CD8-positive, alpha-beta T cell (primary cell): ENCODE measurements at regions of chr12 and their contacts with region 1.

Region 1: DNA sequence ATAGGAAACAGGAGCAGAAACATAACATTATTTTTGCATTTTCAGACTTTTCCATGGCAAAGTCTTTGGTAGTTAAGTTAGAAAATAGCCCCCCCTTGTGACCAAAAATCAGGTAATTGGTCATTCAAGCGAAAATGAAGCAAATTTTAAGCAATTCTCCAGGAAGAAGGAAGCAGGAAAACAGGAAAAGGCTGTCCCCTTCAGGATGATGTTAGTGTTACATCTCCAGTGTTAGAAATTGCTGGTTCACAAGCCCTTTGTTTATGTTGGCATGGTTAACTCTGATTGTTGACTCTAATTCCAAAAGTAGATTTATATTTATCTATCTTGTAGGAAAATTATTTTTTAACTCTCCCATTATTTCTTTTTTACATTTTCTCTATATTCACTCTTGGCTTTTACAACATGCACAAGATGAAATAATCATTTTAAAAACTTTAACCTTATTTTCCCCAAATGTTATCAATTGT is 18.8 kb upstream of the GAS2L3 start:
- DNase-seq: peak in 2 of 9 experiments; percentile 22 to 41
- ATAC-seq: no peak
- H3K4me3 ChIP-seq: no peak overlapping the region
- H3K4me3 Mint-ChIP-seq: no peak overlapping the region
- H3K27ac ChIP-seq: no peak overlapping the region
- H3K27ac Mint-ChIP-seq: no peak overlapping the region
- H3K4me1 ChIP-seq: no peaks in the 10 kb centered on the region
- H3K4me1 Mint-ChIP-seq: no peaks in the 10 kb centered on the region
- H3K27me3 ChIP-seq: no peaks in the 10 kb centered on the region
- H3K27me3 Mint-ChIP-seq: peaks cover 6% of the 10 kb centered on the region
- CTCF ChIP-seq: peak; percentile 42

Region 2: DNA sequence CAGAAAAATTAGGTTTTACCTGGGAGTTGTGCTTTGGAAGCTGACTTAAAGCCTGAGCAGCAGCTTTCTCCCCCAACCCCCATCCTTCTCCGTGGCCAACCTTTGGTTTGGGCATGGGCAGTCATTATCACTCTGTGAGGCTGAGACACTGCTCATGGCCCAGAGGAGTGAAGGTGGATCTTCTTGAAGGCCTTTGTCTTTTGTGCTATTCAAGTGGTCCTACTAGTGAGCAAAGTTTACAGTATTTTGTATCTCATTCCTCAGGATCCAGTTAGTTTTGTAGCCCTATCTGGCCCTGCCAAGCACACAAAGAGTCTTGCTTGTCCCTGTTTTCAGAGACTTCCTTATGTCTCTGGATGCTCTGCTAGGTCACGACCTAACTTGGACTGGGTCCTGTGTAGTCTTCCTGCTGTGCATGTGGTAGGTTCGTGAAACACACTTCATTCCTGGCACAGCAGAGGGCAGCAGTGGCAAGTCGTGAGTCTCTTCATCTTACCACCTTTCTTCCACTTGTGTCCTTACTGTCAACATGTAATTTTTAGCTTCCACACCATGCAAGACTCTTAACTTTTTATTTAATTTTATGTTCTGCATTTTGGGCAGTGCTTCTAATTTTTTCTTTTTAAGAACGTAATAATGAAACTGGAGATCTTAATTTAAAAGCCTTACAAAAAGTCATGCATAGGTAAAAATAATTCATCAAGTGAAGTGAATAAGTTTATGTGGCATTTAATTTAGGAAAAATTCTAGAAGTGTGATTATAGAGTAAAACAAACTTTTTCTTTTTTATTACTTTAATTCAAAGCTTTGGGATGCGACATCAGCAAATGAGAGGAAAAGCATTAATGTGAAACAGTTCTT is 1855.8 kb before region 1 on chr12:
- CTCF ChIA-PET with region 1: no interaction called
- POLR2A ChIA-PET with region 1: no interaction called
- intact Hi-C with region 1: loop called in 1 of 2 experiments (anchors 10 kb)
- DNase-seq: peak in 7 of 9 experiments; percentile 2 to 50 (median 19)
- ATAC-seq: peak; percentile 63
- H3K4me3 ChIP-seq: no peak overlapping the region
- H3K4me3 Mint-ChIP-seq: no peak overlapping the region
- H3K27ac ChIP-seq: no peak overlapping the region
- H3K27ac Mint-ChIP-seq: no peak overlapping the region
- H3K4me1 ChIP-seq: no peaks in the 10 kb centered on the region
- H3K4me1 Mint-ChIP-seq: peaks cover 9% of the 10 kb centered on the region
- H3K27me3 ChIP-seq: no peaks in the 10 kb centered on the region
- H3K27me3 Mint-ChIP-seq: no peaks in the 10 kb centered on the region
- CTCF ChIP-seq: peak; percentile 41

Region 3: DNA sequence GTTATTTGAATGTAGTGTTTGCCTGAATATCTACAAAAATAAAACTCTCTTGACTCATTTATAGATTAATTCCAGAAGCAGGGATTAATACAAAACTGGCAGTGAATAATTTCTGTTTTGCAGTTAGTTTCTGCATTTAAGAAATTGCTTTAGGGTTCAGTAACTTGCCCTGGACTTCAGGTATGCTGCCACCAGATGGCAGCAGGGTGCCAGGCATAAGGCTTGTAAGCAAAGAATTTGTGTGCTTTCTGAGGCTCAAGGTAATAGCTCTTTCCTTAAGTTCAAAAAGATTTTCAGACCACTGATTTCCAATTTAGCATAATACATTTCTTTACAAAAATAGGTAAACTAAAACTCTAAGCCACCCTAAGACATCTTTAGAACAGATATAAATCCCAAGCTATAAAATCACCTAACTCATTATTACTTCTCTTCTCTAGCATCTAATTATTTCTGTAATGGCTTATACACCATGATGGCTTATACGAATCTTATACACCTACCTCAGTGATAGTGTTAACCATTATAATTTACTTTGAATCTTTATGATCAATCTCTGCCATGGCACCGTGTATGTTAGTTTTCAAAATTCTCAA is 1511.2 kb before region 1 on chr12:
- CTCF ChIA-PET with region 1: no interaction called
- POLR2A ChIA-PET with region 1: no interaction called
- intact Hi-C with region 1: loop called (anchors 5 to 10 kb)
- DNase-seq: peak in 6 of 9 experiments; percentile 1 to 40 (median 14)
- ATAC-seq: no peak
- H3K4me3 ChIP-seq: no peak overlapping the region
- H3K4me3 Mint-ChIP-seq: no peak overlapping the region
- H3K27ac ChIP-seq: no peak overlapping the region
- H3K27ac Mint-ChIP-seq: no peak overlapping the region
- H3K4me1 ChIP-seq: no peaks in the 10 kb centered on the region
- H3K4me1 Mint-ChIP-seq: no peaks in the 10 kb centered on the region
- H3K27me3 ChIP-seq: no peaks in the 10 kb centered on the region
- H3K27me3 Mint-ChIP-seq: peaks cover 3% of the 10 kb centered on the region
- CTCF ChIP-seq: peak; percentile 58

Region 4: GRCh38 chr12:100154474-100155247 is 400.0 kb before region 1 on chr12:
- CTCF ChIA-PET with region 1: no interaction called
- POLR2A ChIA-PET with region 1: no interaction called
- intact Hi-C with region 1: loop called in 1 of 2 experiments (anchors 5 kb)
- DNase-seq: peak; percentile 46 to 81 (median 72)
- ATAC-seq: peak; percentile 72
- H3K4me3 ChIP-seq: no peak overlapping the region
- H3K4me3 Mint-ChIP-seq: no peak overlapping the region
- H3K27ac ChIP-seq: no peak overlapping the region
- H3K27ac Mint-ChIP-seq: no peak overlapping the region
- H3K4me1 ChIP-seq: peaks cover 4% of the 10 kb centered on the region
- H3K4me1 Mint-ChIP-seq: peaks cover 4% of the 10 kb centered on the region
- H3K27me3 ChIP-seq: no peaks in the 10 kb centered on the region
- H3K27me3 Mint-ChIP-seq: no peaks in the 10 kb centered on the region
- CTCF ChIP-seq: peak; percentile 84

Region 5: GRCh38 chr12:100329800-100330199 is 224.8 kb before region 1 on chr12:
- CTCF ChIA-PET with region 1: no interaction called
- POLR2A ChIA-PET with region 1: no interaction called
- intact Hi-C with region 1: no loop called
- DNase-seq: peak in 1 of 9 experiments; percentile 6
- ATAC-seq: no peak
- H3K4me3 ChIP-seq: no peak overlapping the region
- H3K4me3 Mint-ChIP-seq: no peak overlapping the region
- H3K27ac ChIP-seq: no peak overlapping the region
- H3K27ac Mint-ChIP-seq: no peak overlapping the region
- H3K4me1 ChIP-seq: no peaks in the 10 kb centered on the region
- H3K4me1 Mint-ChIP-seq: no peaks in the 10 kb centered on the region
- H3K27me3 ChIP-seq: no peaks in the 10 kb centered on the region
- H3K27me3 Mint-ChIP-seq: no peaks in the 10 kb centered on the region
- CTCF ChIP-seq: no peak

Region 6: DNA sequence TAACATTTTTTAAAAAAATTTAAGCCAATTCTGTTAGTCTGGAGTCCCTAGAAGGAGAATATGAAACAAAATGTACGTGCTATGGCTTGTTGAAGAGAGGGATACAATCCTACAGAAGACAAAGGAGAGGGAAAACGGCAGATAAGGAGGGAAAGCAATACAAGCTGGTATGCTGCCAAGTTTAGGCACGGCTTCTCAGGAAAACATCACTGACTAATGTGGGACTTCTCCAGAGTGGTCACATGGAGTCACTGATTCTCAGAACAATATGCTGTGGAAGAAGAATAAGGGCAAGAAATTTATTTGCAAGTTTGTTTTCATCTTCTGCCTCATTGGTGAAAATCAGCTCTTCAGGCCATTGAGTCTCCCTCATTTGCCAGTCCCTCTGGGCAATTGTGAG is 103.9 kb before region 1 on chr12:
- CTCF ChIA-PET with region 1: no interaction called
- POLR2A ChIA-PET with region 1: no interaction called
- intact Hi-C with region 1: no loop called
- DNase-seq: no peak
- ATAC-seq: no peak
- H3K4me3 ChIP-seq: no peak overlapping the region
- H3K4me3 Mint-ChIP-seq: no peak overlapping the region
- H3K27ac ChIP-seq: no peak overlapping the region
- H3K27ac Mint-ChIP-seq: no peak overlapping the region
- H3K4me1 ChIP-seq: no peaks in the 10 kb centered on the region
- H3K4me1 Mint-ChIP-seq: no peaks in the 10 kb centered on the region
- H3K27me3 ChIP-seq: no peaks in the 10 kb centered on the region
- H3K27me3 Mint-ChIP-seq: peaks cover 18% of the 10 kb centered on the region
- CTCF ChIP-seq: no peak